AG04450 (cell line): ENCODE measurements at regions of chr20 and their contacts with region 1.

Region 1: DNA sequence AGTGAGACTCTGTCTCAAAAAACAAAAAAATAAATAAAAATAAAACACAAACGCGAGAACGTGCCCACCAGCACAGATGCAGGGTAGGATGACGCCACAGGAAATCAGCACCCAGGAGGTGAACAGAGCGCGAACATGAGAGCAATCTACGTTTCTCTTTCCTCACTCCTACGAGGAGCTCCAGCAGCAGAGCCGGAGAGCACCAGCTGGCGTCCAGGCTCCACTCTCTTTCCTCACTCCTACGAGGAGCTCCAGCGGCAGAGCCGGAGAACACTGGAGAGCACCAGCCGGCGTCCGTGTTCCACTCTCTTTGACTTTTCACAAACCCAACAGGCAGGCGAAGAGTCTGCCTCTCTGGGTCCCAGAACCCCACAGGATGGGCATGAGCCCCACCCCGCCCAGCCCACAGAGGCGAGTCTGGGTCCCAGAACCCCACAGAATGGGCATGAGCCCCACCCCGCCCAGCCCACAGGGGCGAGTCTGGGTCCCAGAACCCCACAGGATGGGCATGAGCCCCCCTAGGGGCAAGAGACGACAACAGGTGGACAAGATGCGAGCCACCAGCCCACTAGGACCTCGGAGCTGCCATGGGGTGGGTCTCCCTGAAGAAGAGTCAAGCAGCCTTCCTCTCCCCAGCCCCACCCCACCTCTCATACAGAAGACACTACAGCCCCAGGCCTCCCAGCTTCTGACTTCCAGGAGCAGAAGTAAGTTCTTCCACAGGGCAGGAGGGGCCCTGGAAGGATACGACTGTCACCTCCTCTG is 20.2 kb downstream of the ZBTB46 start:
- DNase-seq: no peak
- H3K4me3 ChIP-seq: no peak overlapping the region
- H3K27ac ChIP-seq: no peak overlapping the region
- H3K27me3 ChIP-seq: no peaks in the 10 kb centered on the region
- CTCF ChIP-seq: no peak

Region 2: GRCh38 chr20:63785691-63786131 is 25.2 kb before region 1 on chr20:
- CTCF ChIA-PET with region 1: interaction called, 11 read pairs
- POLR2A ChIA-PET with region 1: no interaction called
- DNase-seq: no peak
- H3K4me3 ChIP-seq: no peak overlapping the region
- H3K27ac ChIP-seq: no peak overlapping the region
- H3K27me3 ChIP-seq: no peaks in the 10 kb centered on the region
- CTCF ChIP-seq: no peak